ENCODE measurements at regions of chr6 and their contacts with region 1.

Region 1: DNA sequence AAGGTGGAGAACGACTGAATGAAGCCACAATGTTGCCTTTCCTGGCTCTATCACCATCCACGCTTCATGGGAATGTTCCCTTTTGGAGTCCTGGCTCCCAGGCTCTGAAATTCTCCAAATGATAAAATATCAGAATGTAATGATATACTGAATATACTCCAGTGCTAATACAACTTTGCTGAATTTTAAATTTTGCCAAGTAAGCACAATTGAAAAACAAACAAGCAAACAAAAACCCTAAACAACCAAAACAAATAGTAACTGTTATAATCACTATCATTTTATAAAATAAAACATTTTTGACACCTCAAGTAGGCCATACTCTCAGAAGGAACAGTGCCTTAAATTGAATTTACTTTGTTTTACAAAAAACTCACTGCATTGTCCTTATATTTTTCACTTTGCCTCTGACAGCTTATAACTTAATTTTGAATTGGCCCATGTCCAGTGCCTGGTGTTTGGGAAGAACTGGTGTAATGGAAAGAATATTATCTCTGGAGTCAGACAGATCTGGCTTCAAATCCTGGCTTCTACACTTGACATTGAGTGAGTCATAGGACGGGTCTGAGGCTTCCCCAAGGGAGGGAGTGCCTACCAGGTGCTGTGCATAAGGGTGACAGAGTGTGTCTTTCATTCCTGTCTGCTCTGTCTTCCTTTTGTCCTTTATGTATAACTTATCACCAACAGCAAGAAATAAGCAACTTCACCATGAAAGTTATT is 698.3 kb downstream of the EPM2A start:
- DNase-seq: no peak
- H3K4me3 ChIP-seq: no peak overlapping the region
- H3K27ac ChIP-seq: no peak overlapping the region
- H3K4me1 ChIP-seq: no peaks in the 10 kb centered on the region
- H3K27me3 ChIP-seq: no peaks in the 10 kb centered on the region
- CTCF ChIP-seq: no peak
- EP300 ChIP-seq: no peak
- POLR2A ChIP-seq: no peak

Region 2: GRCh38 chr6:143664171-143664570 is 1372.8 kb before region 1 on chr6:
- in situ Hi-C with region 1: no loop called
- intact Hi-C with region 1: loop called (anchors 10 kb)
- DNase-seq: no peak
- H3K4me3 ChIP-seq: no peak overlapping the region
- H3K27ac ChIP-seq: no peak overlapping the region
- H3K4me1 ChIP-seq: no peaks in the 10 kb centered on the region
- H3K27me3 ChIP-seq: no peaks in the 10 kb centered on the region
- CTCF ChIP-seq: no peak
- EP300 ChIP-seq: no peak
- POLR2A ChIP-seq: no peak

Region 3: GRCh38 chr6:145233955-145234354 is 196.9 kb after region 1 on chr6:
- in situ Hi-C with region 1: no loop called
- intact Hi-C with region 1: no loop called
- DNase-seq: no peak
- H3K4me3 ChIP-seq: no peak overlapping the region
- H3K27ac ChIP-seq: no peak overlapping the region
- H3K4me1 ChIP-seq: no peaks in the 10 kb centered on the region
- H3K27me3 ChIP-seq: no peaks in the 10 kb centered on the region
- CTCF ChIP-seq: no peak
- EP300 ChIP-seq: no peak
- POLR2A ChIP-seq: no peak